IMR-90 (cell line): ENCODE measurements at regions of chr14 and their contacts with region 1.

Region 1: DNA sequence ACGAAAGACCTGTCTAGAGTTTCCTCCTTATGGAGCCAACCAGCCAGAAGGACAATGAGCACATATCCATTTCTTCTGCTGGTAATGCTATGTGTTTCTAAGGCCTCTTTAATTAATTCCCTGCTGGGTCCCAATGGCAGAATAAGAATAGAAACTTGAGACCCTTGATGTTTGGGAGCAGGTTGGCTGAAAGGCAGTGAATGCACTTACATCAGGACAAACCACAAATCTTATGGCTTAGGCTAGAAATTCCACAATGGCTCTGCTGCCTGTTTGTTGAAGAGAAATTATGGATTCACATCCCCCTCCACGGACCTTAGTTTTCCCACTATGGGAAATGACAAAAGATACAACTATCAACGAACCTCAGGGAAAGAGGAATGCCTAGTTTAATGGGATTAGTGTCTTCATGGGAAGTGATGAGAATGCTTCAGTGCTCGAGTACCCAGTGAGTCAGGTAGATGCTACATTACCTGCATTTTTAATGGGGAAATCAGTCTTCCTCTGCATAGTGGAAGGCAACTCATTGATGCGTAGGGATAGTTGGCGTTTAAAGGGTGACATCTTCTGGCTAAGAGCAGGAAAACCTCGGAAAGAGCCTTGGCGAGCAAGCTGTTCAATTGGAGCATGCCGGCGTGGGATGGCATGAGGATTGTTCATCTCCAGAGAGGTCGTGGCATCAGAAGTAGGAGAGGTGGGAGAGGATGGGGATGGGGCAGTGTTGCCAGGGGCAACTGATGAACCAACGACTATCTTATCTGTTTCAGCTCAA is 46.5 kb downstream of the PAPLN start:
- DNase-seq: peak; percentile 42
- ATAC-seq: peak; percentile 29; the same call in 1 of the 2 replicates
- H3K4me3 ChIP-seq: no peak overlapping the region
- H3K27ac ChIP-seq: no peak overlapping the region
- H3K4me1 ChIP-seq: peaks cover 3% of the 10 kb centered on the region
- H3K27me3 ChIP-seq: no peaks in the 10 kb centered on the region
- CTCF ChIP-seq: peak; percentile 30
- POLR2A ChIP-seq: no peak
- RAD21 ChIP-seq: peak; percentile 37; the same call in 1 of the 2 replicates

Region 2: GRCh38 chr14:73467377-73467776 is 183.6 kb after region 1 on chr14:
- CTCF ChIA-PET with region 1: interaction called, 3 read pairs
- POLR2A ChIA-PET with region 1: interaction called, 17 read pairs
- dilution Hi-C with region 1: loop called (anchors 25 kb)
- in situ Hi-C with region 1: no loop called
- intact Hi-C with region 1: no loop called
- DNase-seq: peak; percentile 59
- ATAC-seq: no peak; the same call in 1 of the 2 replicates
- H3K4me3 ChIP-seq: no peak overlapping the region
- H3K27ac ChIP-seq: peak overlapping the region; percentile 67
- H3K4me1 ChIP-seq: peaks cover 25% of the 10 kb centered on the region
- H3K27me3 ChIP-seq: no peaks in the 10 kb centered on the region
- CTCF ChIP-seq: no peak
- POLR2A ChIP-seq: no peak
- RAD21 ChIP-seq: no peak